ENCODE measurements at regions of chr10 and their contacts with region 1.

Region 1: GRCh38 chr10:17423632-17424186 is 30.7 kb downstream of the ST8SIA6 start:
- DNase-seq: no peak
- H3K4me3 ChIP-seq: no peak overlapping the region
- H3K27ac ChIP-seq: no peak overlapping the region
- H3K4me1 ChIP-seq: no peaks in the 10 kb centered on the region
- H3K27me3 ChIP-seq: no peaks in the 10 kb centered on the region
- CTCF ChIP-seq: no peak

Region 2: DNA sequence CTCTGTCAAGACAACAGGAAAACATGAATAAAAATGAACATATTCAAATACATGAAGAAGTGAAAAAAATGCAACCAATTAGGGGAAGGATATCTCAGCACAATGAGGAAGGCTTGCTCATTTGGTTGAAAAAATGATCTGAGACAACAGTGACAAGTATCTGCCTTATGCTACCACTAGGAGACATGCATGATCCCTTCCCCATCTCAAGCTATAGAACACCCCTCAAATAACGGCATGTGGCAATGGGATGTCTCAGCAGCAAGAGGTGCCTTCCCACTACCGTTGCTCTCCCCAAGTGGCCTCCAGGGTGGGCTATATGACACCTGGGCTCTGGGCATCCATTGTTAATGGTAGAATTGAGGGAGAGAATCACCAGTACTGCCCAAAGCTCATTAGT is 508.4 kb before region 1 on chr10:
- CTCF ChIA-PET with region 1: no interaction called
- POLR2A ChIA-PET with region 1: no interaction called
- intact Hi-C with region 1: no loop called
- DNase-seq: no peak
- H3K4me3 ChIP-seq: no peak overlapping the region
- H3K27ac ChIP-seq: no peak overlapping the region
- H3K4me1 ChIP-seq: no peaks in the 10 kb centered on the region
- H3K27me3 ChIP-seq: no peaks in the 10 kb centered on the region
- CTCF ChIP-seq: no peak

Region 3: GRCh38 chr10:17464545-17464944 is 40.8 kb after region 1 on chr10:
- CTCF ChIA-PET with region 1: interaction called, 21 read pairs
- POLR2A ChIA-PET with region 1: no interaction called
- intact Hi-C with region 1: no loop called
- DNase-seq: no peak
- H3K4me3 ChIP-seq: no peak overlapping the region
- H3K27ac ChIP-seq: no peak overlapping the region
- H3K4me1 ChIP-seq: no peaks in the 10 kb centered on the region
- H3K27me3 ChIP-seq: no peaks in the 10 kb centered on the region
- CTCF ChIP-seq: no peak

Measured in PC-9 (cell line).